Activated T-helper 1 cell treated with anti-CD3 and anti-CD28 coated beads, Interleukin-12 subunit alpha, Interleukin-12 subunit beta, Interleukin-2, Interleukin-4 antibody, amounts not matched to agents 30 ng/mL and 10 ng/mL and 1 ng/mL, durations not matched to agents 14 hours and 24 hours and 36 hours (primary cell): ENCODE measurements at regions of chr16 and their contacts with region 1.

Region 1: GRCh38 chr16:46973207-46973995 is at the start of gene DNAJA2:
- DNase-seq: peak; percentile 86
- H3K4me3 Mint-ChIP-seq: peak within 1 kb of the TSS; percentile 97
- H3K27ac Mint-ChIP-seq: peak within 1 kb of the TSS; percentile 96
- H3K4me1 Mint-ChIP-seq: peaks cover 47% of the 10 kb centered on the region
- H3K27me3 Mint-ChIP-seq: no peaks in the 10 kb centered on the region
- total RNA-seq, gene DNAJA2: 83.6 and 86.3 TPM in 2 replicates

Region 2: GRCh38 chr16:46621006-46621933 is 352.1 kb before region 1 on chr16 and contains the start of gene SHCBP1:
- intact Hi-C with region 1: loop called (anchors 1 kb)
- DNase-seq: peak; percentile 80
- H3K4me3 Mint-ChIP-seq: peak within 1 kb of the TSS; percentile 97
- H3K27ac Mint-ChIP-seq: peak within 1 kb of the TSS; percentile 97
- H3K4me1 Mint-ChIP-seq: peaks cover 39% of the 10 kb centered on the region
- H3K27me3 Mint-ChIP-seq: no peaks in the 10 kb centered on the region
- total RNA-seq, gene SHCBP1: 46.5 and 46.8 TPM in 2 replicates

Region 3: DNA sequence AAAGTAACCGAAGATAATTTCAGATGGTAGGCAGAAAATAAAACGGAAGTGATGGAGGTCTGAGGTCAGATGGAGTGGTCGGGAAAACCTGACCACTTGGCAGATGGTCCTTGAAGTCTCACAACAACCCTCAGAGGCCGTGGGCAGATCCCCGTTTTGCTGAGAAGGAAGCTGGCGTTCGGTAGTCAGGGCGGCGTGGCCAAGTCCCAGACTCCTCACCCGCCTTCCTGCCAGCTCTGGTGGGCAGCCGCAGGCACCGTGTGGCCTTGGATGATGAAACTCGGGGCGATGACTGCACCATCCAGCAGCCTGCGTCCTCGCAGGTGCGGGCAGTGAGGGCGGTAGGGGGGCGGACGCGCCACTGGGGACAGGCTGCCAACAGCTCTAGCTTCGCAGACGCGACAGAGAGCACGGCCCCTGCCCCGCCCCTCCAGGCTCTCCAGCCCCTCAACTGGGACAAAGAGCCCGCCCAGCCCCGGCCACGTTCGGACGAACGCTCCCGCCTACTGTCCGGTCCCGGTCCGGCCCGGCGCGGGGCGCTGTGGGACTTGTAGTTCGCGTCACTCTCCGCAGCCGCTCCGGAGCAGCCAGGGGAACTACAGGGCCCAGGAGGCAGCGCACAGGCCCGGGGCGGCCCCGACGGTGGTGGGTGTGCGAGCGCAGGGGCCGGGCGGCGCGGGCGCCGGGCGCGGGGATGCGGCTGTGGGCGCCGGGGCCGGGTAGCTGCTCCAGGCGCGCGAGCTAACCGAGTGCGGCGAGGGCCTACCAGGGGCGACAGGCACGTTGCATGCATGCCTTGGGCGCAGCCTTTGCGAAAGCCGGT is 89.5 kb before region 1 on chr16 and contains the start of gene GPT2:
- intact Hi-C with region 1: loop called (anchors 1 kb)
- DNase-seq: peak; percentile 82
- H3K4me3 Mint-ChIP-seq: peak within 1 kb of the TSS; percentile 87
- H3K27ac Mint-ChIP-seq: peak within 1 kb of the TSS; percentile 76
- H3K4me1 Mint-ChIP-seq: peaks cover 17% of the 10 kb centered on the region
- H3K27me3 Mint-ChIP-seq: peaks cover 12% of the 10 kb centered on the region
- total RNA-seq, gene GPT2: 20.9 and 22.3 TPM in 2 replicates

Region 4: GRCh38 chr16:47037746-47038458 is 64.5 kb after region 1 on chr16:
- intact Hi-C with region 1: loop called (anchors 1 kb)
- DNase-seq: peak; percentile 85
- H3K4me3 Mint-ChIP-seq: peak overlapping the region; percentile 81
- H3K27ac Mint-ChIP-seq: no peak overlapping the region
- H3K4me1 Mint-ChIP-seq: peaks cover 4% of the 10 kb centered on the region
- H3K27me3 Mint-ChIP-seq: peaks cover 14% of the 10 kb centered on the region

Region 5: DNA sequence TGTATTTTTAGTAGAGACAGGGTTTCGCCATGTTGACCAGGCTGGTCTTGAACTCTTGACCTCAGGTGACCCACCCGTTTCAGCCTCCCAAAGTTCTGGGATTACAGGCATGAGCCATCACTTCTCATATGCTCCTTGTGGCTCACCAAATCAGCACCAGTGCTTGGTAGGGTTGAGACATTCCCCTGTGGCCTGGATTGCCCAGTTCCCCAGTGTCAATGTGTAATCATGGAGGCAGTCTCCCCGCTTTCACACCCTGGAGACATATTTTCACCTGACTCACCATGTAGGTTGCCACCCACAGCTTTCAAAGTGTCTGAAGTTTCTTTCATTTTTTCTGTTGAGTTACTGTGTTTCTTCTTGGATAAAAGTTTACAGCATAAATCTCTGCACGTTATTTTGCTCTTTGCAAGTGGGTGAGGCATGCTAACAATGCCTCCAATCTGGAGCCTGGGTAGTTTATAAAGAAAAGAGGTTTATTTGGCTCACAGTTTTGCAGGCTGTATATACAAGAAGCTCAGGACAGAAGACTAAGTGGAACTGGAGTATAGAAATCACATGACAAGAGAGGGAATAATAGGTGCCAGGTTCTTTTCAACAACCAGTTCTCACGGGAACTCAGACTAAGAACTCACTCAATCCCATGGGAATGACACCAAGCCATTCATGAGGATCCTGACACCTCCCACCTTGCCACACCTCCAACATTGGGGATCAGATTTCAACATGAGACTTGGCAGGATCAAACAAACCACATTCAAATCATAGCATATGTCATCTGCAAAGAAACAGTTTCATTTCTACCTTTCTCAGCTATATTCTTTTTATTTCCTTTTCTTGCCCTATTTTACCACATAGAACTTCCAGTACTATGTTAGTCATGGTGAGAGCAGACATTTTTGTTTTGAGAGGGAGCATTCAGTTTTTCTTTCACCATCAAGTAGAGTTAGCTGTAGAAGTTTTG is 601.0 kb after region 1 on chr16:
- intact Hi-C with region 1: loop called (anchors 10 kb)
- DNase-seq: no peak
- H3K4me3 Mint-ChIP-seq: peak overlapping the region; percentile 5
- H3K27ac Mint-ChIP-seq: peak overlapping the region; percentile 45
- H3K4me1 Mint-ChIP-seq: peaks cover 55% of the 10 kb centered on the region
- H3K27me3 Mint-ChIP-seq: no peaks in the 10 kb centered on the region

Region 6: DNA sequence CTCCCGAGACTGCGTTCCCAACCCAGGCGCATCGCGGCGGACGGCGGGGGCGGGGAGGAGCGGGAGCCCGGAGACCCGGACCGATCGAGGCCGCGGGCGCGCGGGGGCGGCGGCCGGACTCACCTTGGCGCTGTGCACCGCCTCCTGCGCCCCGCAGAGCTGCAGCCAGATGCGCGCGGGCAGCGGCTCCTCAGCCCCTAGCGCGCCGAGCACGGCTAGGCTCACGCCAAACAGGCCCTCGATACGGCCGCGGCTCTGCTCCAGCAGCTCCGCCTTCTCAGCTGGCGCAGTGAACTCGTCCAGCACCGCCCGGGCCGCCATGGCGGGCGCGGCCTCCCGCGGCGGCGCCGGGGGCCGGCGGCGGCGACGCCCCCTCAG is 1636.2 kb after region 1 on chr16:
- intact Hi-C with region 1: loop called (anchors 5 kb)
- DNase-seq: no peak
- H3K4me3 Mint-ChIP-seq: no peak overlapping the region
- H3K27ac Mint-ChIP-seq: peak overlapping the region; percentile 93
- H3K4me1 Mint-ChIP-seq: peaks cover 50% of the 10 kb centered on the region
- H3K27me3 Mint-ChIP-seq: no peaks in the 10 kb centered on the region